CD4-positive, alpha-beta memory T cell (primary cell): ENCODE measurements at regions of chr13 and their contacts with region 1.

Region 1: GRCh38 chr13:21176220-21176982 is at the starts of genes MRPL57 and SKA3:
- DNase-seq: peak; percentile 92 to 95 (median 95)
- H3K4me3 ChIP-seq: peak within 1 kb of the TSS; percentile 57 to 84
- H3K4me3 Mint-ChIP-seq: peak within 1 kb of the TSS; percentile 91 to 99 (median 97)
- H3K27ac ChIP-seq: peak within 1 kb of the TSS; percentile 89
- H3K27ac Mint-ChIP-seq: peak within 1 kb of the TSS; percentile 91 to 99 (median 97)
- H3K4me1 ChIP-seq: peaks cover 21% of the 10 kb centered on the region
- H3K4me1 Mint-ChIP-seq: peaks cover 12 to 31% (median 17%) of the 10 kb centered on the region in 4 donors
- H3K27me3 ChIP-seq: no peaks in the 10 kb centered on the region
- H3K27me3 Mint-ChIP-seq: no peaks in the 10 kb centered on the region
- total RNA-seq, gene MRPL57: 22.8 to 24.5 TPM
- total RNA-seq, gene SKA3: 0.33 TPM in 1 of 2 experiments, not detected in the other

Region 2: DNA sequence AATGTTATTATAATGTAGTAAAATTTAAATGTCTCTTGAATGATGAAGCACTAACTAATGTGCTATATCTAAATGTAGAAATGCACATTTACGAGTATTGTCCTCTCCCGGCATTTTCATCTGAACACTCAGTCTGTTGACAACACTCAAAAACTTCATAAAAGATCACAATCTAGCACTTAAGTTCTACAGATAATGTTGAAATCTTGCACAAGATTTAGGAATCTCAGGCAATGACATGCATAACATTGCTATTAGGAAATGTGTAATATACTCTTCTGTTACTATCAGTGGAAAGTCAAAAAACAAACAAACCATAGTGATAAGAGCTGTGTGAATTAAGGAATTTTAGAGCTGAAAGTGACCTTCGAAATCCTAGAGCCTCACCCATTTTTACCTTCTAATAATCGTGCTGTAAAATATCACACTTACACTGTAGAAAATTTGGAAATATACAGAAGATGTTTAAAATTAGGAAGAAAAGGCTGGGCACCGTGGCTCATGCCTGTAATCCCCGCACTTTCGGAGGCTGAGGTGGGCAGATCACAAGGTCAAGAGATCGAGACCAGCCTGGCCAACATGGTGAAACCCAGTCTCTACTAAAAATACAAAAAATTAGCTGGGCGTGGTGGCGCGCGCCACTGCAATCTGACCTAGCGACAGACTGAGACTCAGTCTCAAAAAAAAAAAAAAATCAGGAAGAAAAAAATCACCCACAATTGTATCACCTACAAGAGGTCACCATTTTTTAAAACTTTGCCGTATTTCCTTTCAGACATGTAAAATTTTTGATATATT is 236.1 kb before region 1 on chr13:
- CTCF ChIA-PET with region 1: interaction called, 10 read pairs
- POLR2A ChIA-PET with region 1: no interaction called
- intact Hi-C with region 1: no loop called
- DNase-seq: no peak
- H3K4me3 ChIP-seq: no peak overlapping the region
- H3K4me3 Mint-ChIP-seq: no peak overlapping the region
- H3K27ac ChIP-seq: no peak overlapping the region
- H3K27ac Mint-ChIP-seq: no peak overlapping the region
- H3K4me1 ChIP-seq: peaks cover 3% of the 10 kb centered on the region
- H3K4me1 Mint-ChIP-seq: peaks cover 0 to 8% (median under 1%) of the 10 kb centered on the region in 4 donors
- H3K27me3 ChIP-seq: no peaks in the 10 kb centered on the region
- H3K27me3 Mint-ChIP-seq: peaks cover 25 to 30% of the 10 kb centered on the region in 2 donors

Region 3: GRCh38 chr13:21095311-21095710 is 81.1 kb before region 1 on chr13:
- CTCF ChIA-PET with region 1: no interaction called
- POLR2A ChIA-PET with region 1: no interaction called
- intact Hi-C with region 1: no loop called
- DNase-seq: no peak
- H3K4me3 ChIP-seq: no peak overlapping the region
- H3K4me3 Mint-ChIP-seq: no peak overlapping the region
- H3K27ac ChIP-seq: no peak overlapping the region
- H3K27ac Mint-ChIP-seq: no peak overlapping the region
- H3K4me1 ChIP-seq: no peaks in the 10 kb centered on the region
- H3K4me1 Mint-ChIP-seq: no peaks in the 10 kb centered on the region
- H3K27me3 ChIP-seq: no peaks in the 10 kb centered on the region
- H3K27me3 Mint-ChIP-seq: peaks cover 2 to 5% of the 10 kb centered on the region in 2 donors

Region 4: GRCh38 chr13:21123956-21124355 is 52.4 kb before region 1 on chr13:
- CTCF ChIA-PET with region 1: no interaction called
- POLR2A ChIA-PET with region 1: no interaction called
- intact Hi-C with region 1: no loop called
- DNase-seq: no peak
- H3K4me3 ChIP-seq: no peak overlapping the region
- H3K4me3 Mint-ChIP-seq: no peak overlapping the region
- H3K27ac ChIP-seq: no peak overlapping the region
- H3K27ac Mint-ChIP-seq: no peak overlapping the region
- H3K4me1 ChIP-seq: no peaks in the 10 kb centered on the region
- H3K4me1 Mint-ChIP-seq: no peaks in the 10 kb centered on the region
- H3K27me3 ChIP-seq: no peaks in the 10 kb centered on the region
- H3K27me3 Mint-ChIP-seq: peaks cover 0 to 6% of the 10 kb centered on the region in 2 donors

Region 5: GRCh38 chr13:21149568-21149967 is 26.8 kb before region 1 on chr13:
- CTCF ChIA-PET with region 1: interaction called, 4 read pairs
- POLR2A ChIA-PET with region 1: interaction called, 18 read pairs
- intact Hi-C with region 1: no loop called
- DNase-seq: no peak
- H3K4me3 ChIP-seq: no peak overlapping the region
- H3K4me3 Mint-ChIP-seq: no peak overlapping the region
- H3K27ac ChIP-seq: no peak overlapping the region
- H3K27ac Mint-ChIP-seq: no peak overlapping the region
- H3K4me1 ChIP-seq: peaks cover 5% of the 10 kb centered on the region
- H3K4me1 Mint-ChIP-seq: peaks cover 1 to 3% (median 2%) of the 10 kb centered on the region in 4 donors
- H3K27me3 ChIP-seq: no peaks in the 10 kb centered on the region
- H3K27me3 Mint-ChIP-seq: no peaks in the 10 kb centered on the region

Region 6: DNA sequence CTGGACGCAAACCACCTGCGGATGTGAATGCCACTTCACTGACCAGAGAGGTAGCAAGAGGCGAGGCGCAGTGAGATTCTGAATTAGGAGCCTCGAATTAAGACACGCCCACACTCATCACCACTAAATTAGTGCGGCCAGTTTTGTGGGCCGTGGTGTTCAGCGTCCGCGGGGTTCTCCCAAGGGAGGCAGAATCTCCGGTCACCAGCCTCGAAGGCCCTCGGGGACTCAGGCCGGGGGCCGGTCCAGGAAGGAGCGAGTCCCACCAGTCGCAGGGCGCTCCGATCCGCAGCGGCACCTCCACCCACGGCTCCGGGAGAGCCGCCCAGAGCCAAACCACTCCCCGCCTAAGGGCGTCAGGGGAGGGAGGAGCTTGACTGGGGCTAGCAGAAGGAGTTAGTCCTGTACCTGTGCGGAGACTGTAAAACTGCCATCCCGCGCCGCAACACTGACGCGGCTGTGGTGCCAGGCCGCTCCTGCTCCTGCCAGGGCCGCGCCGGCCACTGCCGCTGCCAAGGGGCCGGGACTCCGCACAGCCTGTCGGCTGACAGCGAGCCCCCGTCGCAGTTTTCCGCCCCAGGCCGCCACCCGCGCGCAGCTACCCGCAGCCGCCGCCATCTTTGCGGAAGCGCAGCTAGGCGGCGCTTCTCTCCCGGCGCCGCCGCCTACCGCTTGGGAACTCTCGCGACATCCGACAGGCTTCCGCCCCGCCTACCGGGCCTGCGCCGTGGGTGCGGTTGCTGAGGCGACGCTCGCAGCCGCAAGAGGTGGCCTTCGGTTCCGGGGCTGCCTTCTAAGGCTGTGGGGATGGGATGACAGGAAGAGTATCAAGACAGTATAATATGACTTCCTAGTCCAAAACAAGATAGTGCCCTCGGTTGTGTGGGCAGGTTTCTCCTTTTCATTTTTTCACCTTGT is 427.4 kb after region 1 on chr13 and contains the start of gene MICU2:
- CTCF ChIA-PET with region 1: no interaction called
- POLR2A ChIA-PET with region 1: interaction called, 17 read pairs
- intact Hi-C with region 1: loop called (anchors 1 kb)
- DNase-seq: peak; percentile 96 to 97 (median 97)
- H3K4me3 ChIP-seq: peak within 1 kb of the TSS; percentile 78 to 83
- H3K4me3 Mint-ChIP-seq: peak within 1 kb of the TSS; percentile 86 to 97 (median 89)
- H3K27ac ChIP-seq: peak within 1 kb of the TSS; percentile 85
- H3K27ac Mint-ChIP-seq: peak within 1 kb of the TSS; percentile 90 to 97 (median 95)
- H3K4me1 ChIP-seq: peaks cover 36% of the 10 kb centered on the region
- H3K4me1 Mint-ChIP-seq: peaks cover 28 to 58% (median 36%) of the 10 kb centered on the region in 4 donors
- H3K27me3 ChIP-seq: no peaks in the 10 kb centered on the region
- H3K27me3 Mint-ChIP-seq: peaks cover 4% of the 10 kb centered on the region in 2 donors
- total RNA-seq, gene MICU2: 46.0 to 50.3 TPM